ENCODE measurements at regions of chr19 and their contacts with region 1.

Region 1: DNA sequence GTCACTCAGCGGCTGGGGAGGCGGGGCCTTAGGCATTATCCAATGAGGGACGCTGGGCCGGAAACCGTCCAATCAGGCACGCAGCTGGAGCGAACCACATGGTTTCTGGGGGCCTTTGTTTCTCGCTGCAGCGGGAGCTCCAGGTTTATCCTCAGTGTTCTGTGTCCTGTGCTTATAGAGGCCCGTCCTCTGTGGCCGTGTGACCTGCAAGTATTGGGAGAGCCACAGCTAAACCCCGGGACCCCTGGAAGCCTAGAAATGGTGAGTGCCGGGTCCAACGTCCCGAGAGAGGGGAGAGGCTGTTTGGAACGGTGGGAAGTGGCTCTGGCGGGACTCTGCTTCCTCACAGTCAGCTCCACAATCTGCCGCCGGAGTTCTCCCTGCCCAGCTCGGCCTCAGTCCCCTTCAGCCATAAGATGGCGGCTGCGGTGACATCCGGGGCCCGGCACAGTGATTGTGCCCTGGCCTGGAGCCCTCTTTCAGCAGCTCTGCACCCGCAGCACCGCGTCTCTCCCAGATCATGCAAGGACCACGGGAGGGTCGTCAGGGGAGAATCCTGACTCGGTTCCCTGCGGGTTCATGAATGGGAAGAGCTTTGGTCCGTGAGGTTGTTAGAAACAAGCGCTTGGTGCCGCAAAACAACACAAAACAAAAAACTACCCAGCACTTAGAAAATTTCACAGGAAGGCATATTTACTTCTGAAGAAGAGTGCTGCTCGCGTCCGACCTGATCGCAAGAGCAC is at the start of gene ZNF253:
- DNase-seq: peak; percentile 97
- H3K4me3 Mint-ChIP-seq: peak within 1 kb of the TSS; percentile 100
- H3K27ac Mint-ChIP-seq: peak within 1 kb of the TSS; percentile 100
- H3K4me1 Mint-ChIP-seq: peaks cover 22% of the 10 kb centered on the region
- H3K27me3 Mint-ChIP-seq: no peaks in the 10 kb centered on the region
- total RNA-seq, gene ZNF253: 12.9 to 14.7 TPM

Region 2: GRCh38 chr19:19732579-19733501 is 133.1 kb before region 1 on chr19 and contains the start of gene ZNF14:
- CTCF ChIA-PET with region 1: interaction called, 7 read pairs
- POLR2A ChIA-PET with region 1: interaction called, 22 read pairs
- DNase-seq: peak; percentile 92
- H3K4me3 Mint-ChIP-seq: peak within 1 kb of the TSS; percentile 100
- H3K27ac Mint-ChIP-seq: peak within 1 kb of the TSS; percentile 89
- H3K4me1 Mint-ChIP-seq: peaks cover 20% of the 10 kb centered on the region
- H3K27me3 Mint-ChIP-seq: no peaks in the 10 kb centered on the region
- total RNA-seq, gene ZNF14: 8.0 to 8.4 TPM

Region 3: GRCh38 chr19:19788015-19788414 is 77.9 kb before region 1 on chr19:
- CTCF ChIA-PET with region 1: no interaction called
- POLR2A ChIA-PET with region 1: no interaction called
- DNase-seq: no peak
- H3K4me3 Mint-ChIP-seq: no peak overlapping the region
- H3K27ac Mint-ChIP-seq: no peak overlapping the region
- H3K4me1 Mint-ChIP-seq: no peaks in the 10 kb centered on the region
- H3K27me3 Mint-ChIP-seq: no peaks in the 10 kb centered on the region

Region 4: GRCh38 chr19:19821366-19821951 is 44.5 kb before region 1 on chr19 and contains the start of gene ZNF506:
- CTCF ChIA-PET with region 1: interaction called, 6 read pairs
- POLR2A ChIA-PET with region 1: interaction called, 77 read pairs
- DNase-seq: peak; percentile 96
- H3K4me3 Mint-ChIP-seq: peak within 1 kb of the TSS; percentile 99
- H3K27ac Mint-ChIP-seq: peak within 1 kb of the TSS; percentile 99
- H3K4me1 Mint-ChIP-seq: peaks cover 29% of the 10 kb centered on the region
- H3K27me3 Mint-ChIP-seq: no peaks in the 10 kb centered on the region
- total RNA-seq, gene ZNF506: 24.6 to 25.5 TPM

Region 5: GRCh38 chr19:20167020-20167644 is 301.2 kb after region 1 on chr19 and contains the start of gene ZNF486:
- CTCF ChIA-PET with region 1: no interaction called
- POLR2A ChIA-PET with region 1: interaction called, 17 read pairs
- DNase-seq: peak; percentile 92
- H3K4me3 Mint-ChIP-seq: peak within 1 kb of the TSS; percentile 95
- H3K27ac Mint-ChIP-seq: peak within 1 kb of the TSS; percentile 87
- H3K4me1 Mint-ChIP-seq: peaks cover 20% of the 10 kb centered on the region
- H3K27me3 Mint-ChIP-seq: no peaks in the 10 kb centered on the region
- total RNA-seq, gene ZNF486: 7.3 to 8.7 TPM

Measured in activated CD4-positive, alpha-beta memory T cell treated with anti-CD3 and anti-CD28 coated beads, Interleukin-2, amount 10 ng/mL, durations not matched to agents 7 days and 5 days (primary cell).